Breast epithelium (tissue), 4 donors: ENCODE measurements at regions of chr2 and their contacts with region 1.

Region 1: DNA sequence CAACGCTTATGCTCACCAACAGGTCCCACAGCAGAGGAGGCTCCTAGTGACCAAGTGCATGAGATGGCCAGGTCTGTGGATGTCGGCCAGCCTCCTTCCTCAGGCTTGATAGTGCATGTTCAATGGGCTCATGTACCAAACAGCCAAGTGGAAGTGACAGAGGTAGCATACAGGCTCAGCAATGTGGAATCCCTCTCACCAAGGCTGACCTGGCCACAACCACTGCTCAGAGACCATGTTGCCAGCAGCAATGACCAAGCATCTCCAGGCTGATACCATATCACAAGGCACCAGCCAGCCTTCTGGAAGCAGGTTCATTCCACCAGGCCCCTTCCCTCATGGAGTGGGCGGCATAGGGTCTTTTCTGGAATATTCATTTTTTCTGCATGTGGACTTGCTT is 61.5 kb downstream of the REEP1 start:
- DNase-seq: no peak
- H3K4me3 ChIP-seq: no peak overlapping the region
- H3K27ac ChIP-seq: no peak overlapping the region
- H3K4me1 ChIP-seq: no peaks in the 10 kb centered on the region
- H3K27me3 ChIP-seq: no peaks in the 10 kb centered on the region
- CTCF ChIP-seq: no peak
- POLR2A ChIP-seq: no peak

Region 2: GRCh38 chr2:85813982-85814801 is 461.8 kb before region 1 on chr2:
- intact Hi-C with region 1: no loop called
- DNase-seq: peak; percentile 89 to 93
- H3K4me3 ChIP-seq: no peak overlapping the region
- H3K27ac ChIP-seq: no peak overlapping the region
- H3K4me1 ChIP-seq: no peaks in the 10 kb centered on the region
- H3K27me3 ChIP-seq: no peaks in the 10 kb centered on the region
- CTCF ChIP-seq: peak; percentile 84 to 97 (median 95)
- POLR2A ChIP-seq: no peak

Region 3: GRCh38 chr2:86352137-86352726 is 76.3 kb after region 1 on chr2:
- intact Hi-C with region 1: loop called (anchors 2 kb)
- DNase-seq: no peak
- H3K4me3 ChIP-seq: no peak overlapping the region
- H3K27ac ChIP-seq: no peak overlapping the region
- H3K4me1 ChIP-seq: no peaks in the 10 kb centered on the region
- H3K27me3 ChIP-seq: no peaks in the 10 kb centered on the region
- CTCF ChIP-seq: no peak
- POLR2A ChIP-seq: no peak